AG04449 (cell line): ENCODE measurements at regions of chr17 and their contacts with region 1.

Region 1: GRCh38 chr17:48074315-48075081 is 26.3 kb downstream of the NFE2L1 start:
- DNase-seq: peak; percentile 52
- H3K4me3 ChIP-seq: no peak overlapping the region
- CTCF ChIP-seq: peak; percentile 56

Region 2: DNA sequence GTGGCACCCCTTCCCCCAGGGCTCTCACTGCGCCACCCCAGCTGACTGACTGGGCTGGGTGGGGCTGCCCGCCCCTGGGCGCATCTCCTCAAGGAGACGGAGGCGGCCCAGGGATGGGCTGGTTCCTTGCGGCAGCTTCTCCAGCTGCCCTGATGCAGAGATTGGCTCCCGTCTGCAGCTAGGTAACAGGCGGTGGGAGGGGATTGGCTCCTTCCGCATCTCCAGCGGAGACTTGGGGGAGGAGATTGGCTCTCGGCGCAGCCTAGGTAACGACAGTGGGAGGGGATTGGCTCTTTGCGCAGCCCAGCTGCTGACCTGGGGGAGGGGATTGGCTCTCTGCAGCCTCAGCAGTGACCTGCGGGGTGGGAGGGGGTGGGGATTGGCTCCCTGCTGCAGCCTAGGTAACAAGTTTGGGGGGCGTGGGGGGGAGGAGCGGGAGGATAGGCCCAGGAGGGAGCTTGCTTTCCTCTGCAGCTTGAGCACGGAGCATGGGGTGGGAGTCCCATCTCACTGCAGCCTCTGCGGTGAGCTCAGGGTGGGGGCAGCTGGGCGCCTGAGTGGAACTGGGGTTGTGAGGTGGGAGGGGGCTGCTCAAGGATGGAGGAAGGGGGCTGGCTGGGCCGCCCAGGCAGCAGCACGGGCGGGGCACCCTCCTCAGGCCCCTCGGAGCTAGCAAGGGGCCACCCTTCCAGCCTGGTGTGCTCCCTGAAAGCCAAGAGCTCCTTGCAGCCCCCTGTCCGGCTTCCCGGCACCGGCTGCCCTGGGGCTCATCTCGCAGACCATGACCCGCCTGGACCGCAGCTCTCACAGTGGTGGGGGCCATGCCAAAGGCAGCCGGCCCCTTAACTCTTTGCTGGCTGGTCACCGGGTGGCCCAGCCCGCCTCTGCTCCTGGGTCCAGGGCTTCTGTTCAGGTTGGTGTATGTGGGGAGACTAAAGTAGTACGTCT is 20.0 kb before region 1 on chr17:
- CTCF ChIA-PET with region 1: interaction called, 41 read pairs
- POLR2A ChIA-PET with region 1: no interaction called
- DNase-seq: no peak
- H3K4me3 ChIP-seq: peak overlapping the region; percentile 15
- CTCF ChIP-seq: no peak

Region 3: GRCh38 chr17:48084932-48085444 is 10.5 kb after region 1 on chr17:
- CTCF ChIA-PET with region 1: interaction called, 49 read pairs
- POLR2A ChIA-PET with region 1: no interaction called
- DNase-seq: no peak
- H3K4me3 ChIP-seq: no peak overlapping the region
- CTCF ChIP-seq: no peak

Region 4: DNA sequence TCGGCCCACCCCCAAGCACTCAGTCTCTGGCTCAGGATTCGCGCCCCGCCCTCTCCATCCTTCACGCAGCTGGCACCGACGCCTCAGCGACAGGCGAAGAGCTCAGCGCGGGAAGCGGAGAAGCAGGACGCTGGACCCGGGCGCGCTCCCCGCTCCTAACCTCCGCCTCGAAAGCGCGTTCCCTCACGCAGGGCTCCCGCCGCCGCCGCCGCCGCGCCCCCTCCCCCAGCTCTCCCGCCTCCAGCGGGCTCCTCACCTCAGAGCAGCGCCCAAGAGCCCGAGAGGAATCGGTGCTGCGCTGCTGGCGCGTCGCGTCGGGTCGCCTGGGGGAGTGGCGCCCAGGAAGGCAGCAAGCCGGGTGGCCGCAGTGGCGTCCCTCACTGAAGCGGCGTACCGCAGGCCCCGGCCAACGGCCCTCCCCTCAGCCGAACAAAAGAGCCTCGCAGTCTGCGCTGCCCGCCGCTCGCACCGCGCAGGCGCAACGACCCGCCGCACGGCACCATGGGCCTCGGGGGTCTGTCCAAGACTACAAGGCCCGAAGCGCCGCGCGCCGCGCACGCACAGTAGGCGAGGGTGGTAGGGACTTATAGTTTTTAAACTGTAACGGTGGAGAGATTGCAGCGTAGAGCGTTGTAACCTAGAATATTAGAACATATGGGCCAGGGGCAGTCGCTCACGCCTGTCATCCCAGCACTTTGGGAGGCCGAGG is 26.7 kb after region 1 on chr17 and contains the start of gene CBX1:
- CTCF ChIA-PET with region 1: interaction called, 56 read pairs
- POLR2A ChIA-PET with region 1: no interaction called
- DNase-seq: peak; percentile 46
- H3K4me3 ChIP-seq: peak within 1 kb of the TSS; percentile 88
- CTCF ChIP-seq: no peak

Region 5: GRCh38 chr17:48131216-48131824 is 56.8 kb after region 1 on chr17:
- CTCF ChIA-PET with region 1: interaction called, 60 read pairs
- POLR2A ChIA-PET with region 1: no interaction called
- DNase-seq: no peak
- H3K4me3 ChIP-seq: no peak overlapping the region
- CTCF ChIP-seq: peak; percentile 78

Region 6: GRCh38 chr17:48241131-48241591 is 166.7 kb after region 1 on chr17:
- CTCF ChIA-PET with region 1: no interaction called
- POLR2A ChIA-PET with region 1: no interaction called
- DNase-seq: no peak
- H3K4me3 ChIP-seq: no peak overlapping the region
- CTCF ChIP-seq: no peak